ENCODE measurements at regions of chr3 and their contacts with region 1.

Region 1: GRCh38 chr3:51384726-51385473 is at the start of gene MANF:
- DNase-seq: peak; percentile 98
- H3K4me3 ChIP-seq: peak within 1 kb of the TSS; percentile 76 to 95 (median 95)
- H3K27ac ChIP-seq: peak within 1 kb of the TSS; percentile 91
- H3K4me1 ChIP-seq: peaks cover 29% of the 10 kb centered on the region
- H3K27me3 ChIP-seq: no peaks in the 10 kb centered on the region
- CTCF ChIP-seq: no peak
- total RNA-seq, gene MANF: 38.0 to 185 TPM

Region 2: GRCh38 chr3:50568947-50569749 is 815.8 kb before region 1 on chr3 and contains the start of gene HEMK1:
- CTCF ChIA-PET with region 1: no interaction called
- dilution Hi-C with region 1: no loop called
- in situ Hi-C with region 1: no loop called
- intact Hi-C with region 1: loop called (anchors 5 kb)
- DNase-seq: peak; percentile 89
- H3K4me3 ChIP-seq: peak within 1 kb of the TSS; percentile 86 to 97 (median 93)
- H3K27ac ChIP-seq: peak within 1 kb of the TSS; percentile 73
- H3K4me1 ChIP-seq: peaks cover 16% of the 10 kb centered on the region
- H3K27me3 ChIP-seq: no peaks in the 10 kb centered on the region
- CTCF ChIP-seq: no peak
- total RNA-seq, gene HEMK1: 14.2 to 23.1 TPM

Region 3: GRCh38 chr3:50971487-50971924 is 413.4 kb before region 1 on chr3:
- CTCF ChIA-PET with region 1: interaction called, 3 read pairs
- dilution Hi-C with region 1: no loop called
- in situ Hi-C with region 1: no loop called
- intact Hi-C with region 1: loop called (anchors 5 kb)
- DNase-seq: peak; percentile 53
- H3K4me3 ChIP-seq: no peak overlapping the region
- H3K27ac ChIP-seq: no peak overlapping the region
- H3K4me1 ChIP-seq: no peaks in the 10 kb centered on the region
- H3K27me3 ChIP-seq: no peaks in the 10 kb centered on the region
- CTCF ChIP-seq: peak; percentile 88 to 91

Region 4: GRCh38 chr3:51063053-51063452 is 321.8 kb before region 1 on chr3:
- CTCF ChIA-PET with region 1: no interaction called
- dilution Hi-C with region 1: no loop called
- in situ Hi-C with region 1: no loop called
- intact Hi-C with region 1: no loop called
- DNase-seq: no peak
- H3K4me3 ChIP-seq: no peak overlapping the region
- H3K27ac ChIP-seq: no peak overlapping the region
- H3K4me1 ChIP-seq: no peaks in the 10 kb centered on the region
- H3K27me3 ChIP-seq: peaks cover 4% of the 10 kb centered on the region
- CTCF ChIP-seq: no peak

Region 5: DNA sequence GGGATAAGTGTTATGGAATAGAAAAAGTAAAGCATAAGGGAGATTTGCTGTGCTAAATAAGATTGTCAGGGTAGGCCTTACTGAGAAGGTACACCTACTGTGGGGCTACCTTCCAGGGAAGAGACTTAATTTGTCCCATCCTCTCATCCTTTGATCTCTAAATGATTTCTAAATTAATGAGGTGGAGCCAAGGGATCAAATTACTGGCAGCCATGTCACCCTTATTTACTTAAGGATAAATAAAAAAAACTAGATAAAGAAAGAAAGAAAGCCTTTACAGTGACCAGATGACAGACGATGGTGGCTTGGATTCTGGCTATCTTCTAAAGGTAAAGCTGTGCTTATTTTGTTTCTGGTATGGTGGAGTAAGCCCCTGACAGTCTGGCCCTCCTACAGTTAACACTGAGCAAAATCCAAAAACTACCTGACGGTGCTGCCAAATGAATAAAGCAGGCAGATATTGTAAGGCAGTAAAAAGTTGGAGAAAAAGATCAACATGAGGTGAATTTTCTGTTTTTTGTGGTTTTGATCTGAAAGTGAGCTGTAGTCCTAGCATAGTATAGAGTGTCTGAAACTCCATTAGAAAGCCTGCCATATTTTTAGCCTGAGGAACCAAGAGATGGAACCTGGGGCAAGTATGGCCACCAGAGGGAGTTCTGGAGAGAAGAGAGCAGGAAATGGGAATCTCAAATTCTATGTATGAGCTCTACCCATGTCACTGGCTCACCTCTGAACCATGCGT is 284.9 kb before region 1 on chr3:
- CTCF ChIA-PET with region 1: no interaction called
- dilution Hi-C with region 1: no loop called
- in situ Hi-C with region 1: no loop called
- intact Hi-C with region 1: loop called (anchors 5 kb)
- DNase-seq: peak; percentile 46
- H3K4me3 ChIP-seq: no peak overlapping the region
- H3K27ac ChIP-seq: no peak overlapping the region
- H3K4me1 ChIP-seq: no peaks in the 10 kb centered on the region
- H3K27me3 ChIP-seq: no peaks in the 10 kb centered on the region
- CTCF ChIP-seq: peak; percentile 75 to 84

Region 6: GRCh38 chr3:51328206-51328605 is 56.7 kb before region 1 on chr3:
- CTCF ChIA-PET with region 1: no interaction called
- dilution Hi-C with region 1: no loop called
- in situ Hi-C with region 1: no loop called
- intact Hi-C with region 1: no loop called
- DNase-seq: no peak
- H3K4me3 ChIP-seq: no peak overlapping the region
- H3K27ac ChIP-seq: no peak overlapping the region
- H3K4me1 ChIP-seq: no peaks in the 10 kb centered on the region
- H3K27me3 ChIP-seq: no peaks in the 10 kb centered on the region
- CTCF ChIP-seq: no peak

Region 7: GRCh38 chr3:51340013-51340856 is 44.7 kb before region 1 on chr3:
- CTCF ChIA-PET with region 1: no interaction called
- dilution Hi-C with region 1: no loop called
- in situ Hi-C with region 1: no loop called
- intact Hi-C with region 1: loop called (anchors 2 kb)
- DNase-seq: peak; percentile 87
- H3K4me3 ChIP-seq: peak overlapping the region in 1 of 3 experiments; percentile 10
- H3K27ac ChIP-seq: peak overlapping the region; percentile 88
- H3K4me1 ChIP-seq: peaks cover 34% of the 10 kb centered on the region
- H3K27me3 ChIP-seq: no peaks in the 10 kb centered on the region
- CTCF ChIP-seq: no peak

Region 8: DNA sequence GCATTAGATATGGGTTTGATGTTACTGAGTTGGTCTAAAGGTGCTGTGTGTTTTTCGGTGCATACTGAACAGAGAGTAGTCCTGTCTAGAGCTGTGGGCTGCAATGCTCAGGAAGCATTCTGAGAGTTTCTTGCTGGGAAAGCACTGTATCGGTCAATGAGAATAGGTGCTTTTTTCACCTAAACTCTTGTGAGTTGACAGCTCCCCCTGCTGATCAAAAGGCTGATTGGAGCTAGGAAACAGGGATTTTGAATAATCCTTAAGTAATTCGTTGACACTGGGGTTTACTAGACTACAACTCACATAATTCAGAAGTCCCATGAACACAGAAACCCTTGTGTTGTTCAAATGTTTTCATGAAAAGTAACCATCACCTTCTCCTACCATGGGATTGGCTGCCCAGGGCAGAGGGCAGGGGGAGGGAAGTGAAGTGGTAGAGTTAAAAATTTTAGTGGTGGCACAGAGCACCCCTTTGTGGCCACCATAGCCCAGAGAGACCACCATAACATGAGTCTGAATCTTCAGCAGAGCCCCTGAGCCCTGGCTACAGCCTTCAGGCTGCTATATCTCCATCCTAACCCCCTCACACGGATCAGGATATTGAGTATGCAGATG is 12.8 kb before region 1 on chr3:
- CTCF ChIA-PET with region 1: no interaction called
- dilution Hi-C with region 1: no loop called
- in situ Hi-C with region 1: no loop called
- intact Hi-C with region 1: no loop called
- DNase-seq: peak; percentile 52
- H3K4me3 ChIP-seq: no peak overlapping the region
- H3K27ac ChIP-seq: no peak overlapping the region
- H3K4me1 ChIP-seq: no peaks in the 10 kb centered on the region
- H3K27me3 ChIP-seq: no peaks in the 10 kb centered on the region
- CTCF ChIP-seq: peak; percentile 70 to 82

Measured in mammary epithelial cell (primary cell).